Esophagus muscularis mucosa (tissue), 4 donors: ENCODE measurements at regions of chr3 and their contacts with region 1.

Region 1: GRCh38 chr3:25843332-25843731 is 53.4 kb downstream of the OXSM start:
- DNase-seq: no peak
- H3K4me3 ChIP-seq: no peak overlapping the region
- H3K27ac ChIP-seq: no peak overlapping the region
- H3K4me1 ChIP-seq: peaks cover 0 to 5% (median 0%) of the 10 kb centered on the region in 4 donors
- H3K27me3 ChIP-seq: no peaks in the 10 kb centered on the region
- CTCF ChIP-seq: peak; percentile 39 to 45 (median 42)
- EP300 ChIP-seq: no peak
- POLR2A ChIP-seq: no peak

Region 2: GRCh38 chr3:26118165-26118564 is 274.8 kb after region 1 on chr3:
- intact Hi-C with region 1: loop called (anchors 5 kb)
- DNase-seq: no peak
- H3K4me3 ChIP-seq: no peak overlapping the region
- H3K27ac ChIP-seq: no peak overlapping the region
- H3K4me1 ChIP-seq: peaks cover 0 to 6% (median 0%) of the 10 kb centered on the region in 4 donors
- H3K27me3 ChIP-seq: no peaks in the 10 kb centered on the region
- CTCF ChIP-seq: peak; percentile 22 to 48 (median 32)
- EP300 ChIP-seq: no peak
- POLR2A ChIP-seq: no peak

Region 3: DNA sequence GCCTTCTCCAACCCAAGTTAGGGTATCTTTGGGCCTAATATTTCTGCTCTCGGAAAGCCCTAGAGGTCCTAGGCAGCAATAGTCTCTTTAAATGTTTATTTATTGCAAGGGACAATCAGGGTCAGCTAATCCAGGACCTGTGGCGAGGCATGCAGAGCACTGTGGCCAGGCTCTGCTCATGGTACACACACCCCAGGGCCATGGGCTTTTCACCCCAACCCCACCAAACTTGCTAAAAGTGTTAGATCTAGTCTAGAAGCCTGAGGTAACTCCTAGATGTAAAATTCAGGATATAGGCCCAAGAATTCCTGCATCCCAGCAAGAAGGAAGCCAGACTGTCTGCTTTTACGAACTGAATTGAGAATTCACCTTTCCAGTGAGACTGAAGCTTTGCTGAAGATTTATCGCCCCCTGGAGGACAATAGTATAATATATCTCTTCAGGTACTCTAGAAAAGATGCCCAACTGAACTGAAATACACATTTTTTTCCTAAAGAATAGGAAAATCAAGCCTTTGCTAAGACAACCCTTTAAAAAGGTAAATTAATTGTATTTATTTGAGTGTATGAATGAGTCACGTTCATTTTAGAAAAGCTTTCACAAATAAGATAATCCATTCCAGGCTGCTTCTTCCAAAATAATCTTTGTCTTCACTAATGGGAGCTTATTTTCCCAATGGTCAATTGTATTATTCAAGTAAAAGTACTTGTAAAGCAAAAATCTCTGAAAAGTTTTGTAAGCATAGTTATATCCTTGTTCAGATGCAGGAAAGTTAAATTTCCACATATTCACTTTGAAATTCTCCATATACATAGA is 869.1 kb after region 1 on chr3:
- intact Hi-C with region 1: loop called (anchors 2 kb)
- DNase-seq: no peak
- H3K4me3 ChIP-seq: no peak overlapping the region
- H3K27ac ChIP-seq: no peak overlapping the region
- H3K4me1 ChIP-seq: peaks cover 0 to 11% (median 6%) of the 10 kb centered on the region in 4 donors
- H3K27me3 ChIP-seq: no peaks in the 10 kb centered on the region
- CTCF ChIP-seq: peak; percentile 54 to 72 (median 64)
- EP300 ChIP-seq: no peak
- POLR2A ChIP-seq: no peak